Panc1 (cell line): ENCODE measurements at regions of chr7 and their contacts with region 1.

Region 1: GRCh38 chr7:38398725-38399321 is 125.4 kb upstream of the TARP start:
- DNase-seq: peak; percentile 27
- ATAC-seq: peak; percentile 77; the same call in 1 of the 2 replicates
- H3K4me3 ChIP-seq: no peak overlapping the region
- H3K27ac ChIP-seq: no peak overlapping the region
- H3K4me1 ChIP-seq: 0 out of 2 replicates have a peak, but pooled peaks cover 2% of the 10 kb centered on the region
- H3K27me3 ChIP-seq: peaks cover 6% of the 10 kb centered on the region
- CTCF ChIP-seq: peak; percentile 99

Region 2: DNA sequence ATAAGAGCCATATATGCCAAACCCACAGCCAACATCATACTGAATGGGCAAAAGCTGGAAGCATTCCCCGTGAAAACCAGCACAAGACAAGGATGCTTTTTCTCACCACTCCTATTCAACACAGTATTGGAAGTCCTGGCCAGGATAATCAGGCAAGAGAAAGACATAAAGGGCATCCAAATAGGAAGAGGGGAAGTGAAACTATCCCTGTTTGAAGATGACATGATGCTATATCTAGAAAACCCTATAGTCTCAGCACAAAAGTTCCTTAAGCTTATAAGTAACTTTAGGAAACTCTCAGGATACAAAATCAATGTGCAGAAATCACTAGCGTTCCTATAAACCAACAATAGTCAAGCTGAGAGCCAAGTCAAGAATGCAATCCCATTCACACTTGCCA is 244.5 kb before region 1 on chr7:
- CTCF ChIA-PET with region 1: no interaction called
- POLR2A ChIA-PET with region 1: no interaction called
- in situ Hi-C with region 1: no loop called
- intact Hi-C with region 1: no loop called
- DNase-seq: no peak
- ATAC-seq: no peak
- H3K4me3 ChIP-seq: no peak overlapping the region
- H3K27ac ChIP-seq: no peak overlapping the region
- H3K4me1 ChIP-seq: no peaks in the 10 kb centered on the region
- H3K27me3 ChIP-seq: no peaks in the 10 kb centered on the region; the same call in 1 of the 2 replicates
- CTCF ChIP-seq: no peak

Region 3: DNA sequence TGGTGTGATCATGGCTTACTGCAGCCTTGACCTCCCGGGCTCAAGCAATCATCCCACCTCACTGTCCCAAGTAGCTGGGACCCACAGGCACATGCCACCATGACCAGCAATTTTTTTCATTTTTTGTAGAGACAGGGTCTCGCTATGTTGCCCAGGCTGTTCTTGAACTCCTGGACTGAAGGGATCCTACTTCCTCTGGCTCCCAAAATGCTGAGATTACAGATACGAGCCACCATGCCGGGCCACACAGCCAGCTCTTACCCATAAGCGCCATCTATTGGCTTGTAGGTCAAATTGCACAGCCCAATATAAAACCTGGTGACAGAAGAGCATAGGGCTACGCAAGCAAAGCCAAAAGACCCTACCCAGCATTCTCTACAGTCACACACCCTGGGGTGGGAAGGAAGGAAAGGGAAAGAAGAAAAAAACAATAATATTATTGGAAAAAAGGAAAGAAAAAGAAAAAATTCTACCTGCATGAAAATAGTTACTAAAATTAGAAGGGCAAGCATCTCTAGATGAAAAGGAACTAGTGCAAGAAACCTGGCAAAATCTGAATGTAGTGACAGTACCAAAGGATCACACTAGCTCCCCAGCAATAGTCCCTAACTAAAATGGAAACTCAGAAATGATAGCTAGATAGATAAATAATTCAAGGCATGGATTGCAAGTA is 261.7 kb after region 1 on chr7:
- CTCF ChIA-PET with region 1: interaction called, 6 read pairs
- POLR2A ChIA-PET with region 1: no interaction called
- in situ Hi-C with region 1: no loop called
- intact Hi-C with region 1: loop called (anchors 2 kb)
- DNase-seq: peak; percentile 35
- ATAC-seq: peak; percentile 82
- H3K4me3 ChIP-seq: no peak overlapping the region
- H3K27ac ChIP-seq: no peak overlapping the region
- H3K4me1 ChIP-seq: no peaks in the 10 kb centered on the region
- H3K27me3 ChIP-seq: no peaks in the 10 kb centered on the region
- CTCF ChIP-seq: peak; percentile 91

Region 4: GRCh38 chr7:38748056-38748611 is 349.3 kb after region 1 on chr7:
- CTCF ChIA-PET with region 1: no interaction called
- POLR2A ChIA-PET with region 1: no interaction called
- in situ Hi-C with region 1: no loop called
- intact Hi-C with region 1: loop called (anchors 10 kb)
- DNase-seq: no peak
- ATAC-seq: peak; percentile 58; the same call in 1 of the 2 replicates
- H3K4me3 ChIP-seq: no peak overlapping the region
- H3K27ac ChIP-seq: no peak overlapping the region
- H3K4me1 ChIP-seq: no peaks in the 10 kb centered on the region
- H3K27me3 ChIP-seq: no peaks in the 10 kb centered on the region
- CTCF ChIP-seq: peak; percentile 82

Region 5: GRCh38 chr7:38873433-38873832 is 474.6 kb after region 1 on chr7:
- CTCF ChIA-PET with region 1: no interaction called
- POLR2A ChIA-PET with region 1: no interaction called
- in situ Hi-C with region 1: no loop called
- intact Hi-C with region 1: no loop called
- DNase-seq: no peak
- ATAC-seq: no peak
- H3K4me3 ChIP-seq: no peak overlapping the region
- H3K27ac ChIP-seq: no peak overlapping the region
- H3K4me1 ChIP-seq: no peaks in the 10 kb centered on the region
- H3K27me3 ChIP-seq: no peaks in the 10 kb centered on the region
- CTCF ChIP-seq: no peak

Region 6: GRCh38 chr7:39527296-39527695 is 1128.5 kb after region 1 on chr7:
- CTCF ChIA-PET with region 1: no interaction called
- POLR2A ChIA-PET with region 1: no interaction called
- in situ Hi-C with region 1: no loop called
- intact Hi-C with region 1: loop called (anchors 10 kb)
- DNase-seq: no peak
- ATAC-seq: no peak
- H3K4me3 ChIP-seq: no peak overlapping the region
- H3K27ac ChIP-seq: no peak overlapping the region
- H3K4me1 ChIP-seq: no peaks in the 10 kb centered on the region
- H3K27me3 ChIP-seq: no peaks in the 10 kb centered on the region
- CTCF ChIP-seq: no peak